Activated CD4-positive, alpha-beta memory T cell treated with anti-CD3 and anti-CD28 coated beads, Interleukin-2, amount 10 ng/mL, durations not matched to agents 7 days and 5 days (primary cell): ENCODE measurements at regions of chr11 and their contacts with region 1.

Region 1: GRCh38 chr11:3807909-3808860 is at the start of gene PGAP2:
- DNase-seq: peak; percentile 65
- H3K4me3 Mint-ChIP-seq: peak within 1 kb of the TSS; percentile 85
- H3K27ac Mint-ChIP-seq: peak within 1 kb of the TSS; percentile 64
- H3K4me1 Mint-ChIP-seq: peaks cover 20% of the 10 kb centered on the region
- H3K27me3 Mint-ChIP-seq: no peaks in the 10 kb centered on the region
- total RNA-seq, gene PGAP2: 18.0 to 19.0 TPM

Region 2: GRCh38 chr11:3773180-3773579 is 35.0 kb before region 1 on chr11:
- CTCF ChIA-PET with region 1: interaction called, 10 read pairs
- POLR2A ChIA-PET with region 1: interaction called, 4 read pairs
- DNase-seq: no peak
- H3K4me3 Mint-ChIP-seq: no peak overlapping the region
- H3K27ac Mint-ChIP-seq: no peak overlapping the region
- H3K4me1 Mint-ChIP-seq: no peaks in the 10 kb centered on the region
- H3K27me3 Mint-ChIP-seq: no peaks in the 10 kb centered on the region

Region 3: DNA sequence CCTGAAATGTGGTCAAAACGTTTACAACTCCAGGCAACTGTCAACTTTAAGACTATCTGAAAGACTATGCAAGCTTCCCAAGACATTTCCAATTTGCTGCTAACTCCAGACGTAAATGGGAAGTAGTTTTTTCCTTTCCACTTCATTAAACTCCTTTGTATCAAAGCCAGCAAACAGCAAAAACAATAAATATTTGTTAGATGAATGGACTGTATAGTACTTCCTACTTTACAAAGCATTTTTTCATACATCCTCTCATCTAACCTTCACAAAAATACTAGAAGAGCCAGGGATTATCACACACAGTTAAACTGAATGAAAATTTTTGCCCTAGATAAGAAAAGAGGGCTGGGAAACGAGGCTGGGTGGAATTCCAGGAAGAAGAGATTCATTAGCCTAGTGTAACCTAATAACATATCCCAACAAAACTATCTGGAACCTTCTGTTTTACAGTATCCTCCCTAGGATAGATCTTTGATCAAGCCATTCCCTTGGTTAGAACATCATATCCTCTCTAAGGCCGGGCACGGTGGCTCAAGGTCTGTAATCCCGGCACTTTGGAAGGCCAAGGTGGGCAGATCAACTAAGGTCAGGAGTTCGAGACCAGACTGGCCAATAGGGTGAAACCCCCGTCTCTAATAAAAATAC is 21.3 kb before region 1 on chr11:
- CTCF ChIA-PET with region 1: interaction called, 48 read pairs
- POLR2A ChIA-PET with region 1: interaction called, 19 read pairs
- DNase-seq: no peak
- H3K4me3 Mint-ChIP-seq: no peak overlapping the region
- H3K27ac Mint-ChIP-seq: peak overlapping the region; percentile 63
- H3K4me1 Mint-ChIP-seq: peaks cover 75% of the 10 kb centered on the region
- H3K27me3 Mint-ChIP-seq: no peaks in the 10 kb centered on the region

Region 4: DNA sequence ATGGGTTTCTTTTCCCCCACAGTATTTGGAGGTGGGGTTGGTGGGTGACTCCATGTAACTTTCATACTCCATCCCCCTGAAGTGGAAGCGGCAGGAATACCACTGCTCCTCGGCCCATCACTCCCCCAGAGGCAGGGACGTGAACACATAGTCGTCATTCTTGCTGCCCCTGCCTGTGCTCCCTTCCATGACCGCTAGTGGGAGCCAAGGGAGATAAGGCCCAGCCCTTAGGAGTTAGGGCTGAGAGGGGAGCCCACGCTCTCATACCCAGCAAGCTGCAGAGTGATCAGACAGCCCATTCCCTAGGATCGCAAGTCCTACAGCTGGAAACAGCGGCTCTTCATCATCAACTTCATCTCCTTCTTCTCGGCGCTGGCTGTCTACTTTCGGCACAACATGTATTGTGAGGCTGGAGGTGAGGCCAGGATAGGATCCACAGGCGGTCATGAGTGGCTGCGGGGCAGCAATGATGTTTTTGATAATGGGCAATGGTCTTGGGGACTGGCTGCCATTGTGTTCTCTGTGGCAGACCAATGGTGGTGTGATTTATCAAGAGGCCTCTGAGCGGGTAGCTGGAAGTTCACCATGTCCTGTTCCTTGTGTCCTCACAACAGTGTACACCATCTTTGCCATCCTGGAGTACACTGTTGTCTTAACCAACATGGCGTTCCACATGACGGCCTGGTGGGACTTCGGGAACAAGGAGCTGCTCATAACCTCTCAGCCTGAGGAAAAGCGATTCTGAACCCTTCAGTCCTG is 16.7 kb after region 1 on chr11:
- CTCF ChIA-PET with region 1: interaction called, 22 read pairs
- POLR2A ChIA-PET with region 1: interaction called, 8 read pairs
- DNase-seq: peak; percentile 82
- H3K4me3 Mint-ChIP-seq: no peak overlapping the region
- H3K27ac Mint-ChIP-seq: peak overlapping the region; percentile 56
- H3K4me1 Mint-ChIP-seq: peaks cover 30% of the 10 kb centered on the region
- H3K27me3 Mint-ChIP-seq: no peaks in the 10 kb centered on the region

Region 5: GRCh38 chr11:3894128-3894731 is 86.0 kb after region 1 on chr11:
- CTCF ChIA-PET with region 1: no interaction called
- POLR2A ChIA-PET with region 1: no interaction called
- DNase-seq: no peak
- H3K4me3 Mint-ChIP-seq: no peak overlapping the region
- H3K27ac Mint-ChIP-seq: no peak overlapping the region
- H3K4me1 Mint-ChIP-seq: peaks cover 25% of the 10 kb centered on the region
- H3K27me3 Mint-ChIP-seq: no peaks in the 10 kb centered on the region

Region 6: DNA sequence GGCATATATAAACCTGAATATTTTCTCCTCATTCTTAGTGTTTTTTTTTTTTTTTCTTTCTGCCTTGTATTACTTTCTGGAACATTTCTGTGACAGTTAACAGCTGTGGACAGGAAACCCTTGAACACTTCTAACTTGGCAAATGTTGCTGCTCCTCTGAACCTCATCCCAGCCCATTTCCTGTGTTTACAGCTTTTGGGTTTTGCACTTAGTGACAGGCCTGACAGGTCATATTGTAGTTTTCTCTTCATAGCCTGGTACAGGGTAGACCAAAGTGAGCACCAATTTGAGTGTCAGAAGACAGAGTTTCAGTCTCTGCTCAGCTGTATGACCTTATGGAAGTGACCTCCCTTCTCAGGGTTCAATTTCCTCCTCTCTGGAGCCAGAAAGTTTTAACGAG is 138.9 kb after region 1 on chr11:
- CTCF ChIA-PET with region 1: no interaction called
- POLR2A ChIA-PET with region 1: no interaction called
- DNase-seq: peak; percentile 72
- H3K4me3 Mint-ChIP-seq: peak overlapping the region; percentile 65
- H3K27ac Mint-ChIP-seq: peak overlapping the region; percentile 97
- H3K4me1 Mint-ChIP-seq: peaks cover 95% of the 10 kb centered on the region
- H3K27me3 Mint-ChIP-seq: no peaks in the 10 kb centered on the region